ENCODE measurements at regions of chr15 and their contacts with region 1.

Region 1: GRCh38 chr15:100918034-100918689 is 995 bp upstream of the LRRK1 start:
- DNase-seq: peak; percentile 38 to 62
- ATAC-seq: peak; percentile 63 to 72
- H3K4me3 ChIP-seq: peak overlapping the region; percentile 54 to 67 (median 63)
- H3K27ac ChIP-seq: peak overlapping the region in 2 of 4 donors; percentile 14 to 19
- H3K4me1 ChIP-seq: no peaks in the 10 kb centered on the region
- H3K27me3 ChIP-seq: peaks cover 3 to 14% (median 11%) of the 10 kb centered on the region in 3 donors
- CTCF ChIP-seq: peak; percentile 68 to 87 (median 80)
- POLR2A ChIP-seq: no peak

Region 2: GRCh38 chr15:100544290-100544945 is 373.7 kb before region 1 on chr15:
- in situ Hi-C with region 1: no loop called
- intact Hi-C with region 1: no loop called
- DNase-seq: no peak
- ATAC-seq: no peak
- H3K4me3 ChIP-seq: no peak overlapping the region
- H3K27ac ChIP-seq: no peak overlapping the region
- H3K4me1 ChIP-seq: no peaks in the 10 kb centered on the region
- H3K27me3 ChIP-seq: peaks cover 0 to 9% (median 0%) of the 10 kb centered on the region in 3 donors
- CTCF ChIP-seq: no peak
- POLR2A ChIP-seq: no peak

Region 3: DNA sequence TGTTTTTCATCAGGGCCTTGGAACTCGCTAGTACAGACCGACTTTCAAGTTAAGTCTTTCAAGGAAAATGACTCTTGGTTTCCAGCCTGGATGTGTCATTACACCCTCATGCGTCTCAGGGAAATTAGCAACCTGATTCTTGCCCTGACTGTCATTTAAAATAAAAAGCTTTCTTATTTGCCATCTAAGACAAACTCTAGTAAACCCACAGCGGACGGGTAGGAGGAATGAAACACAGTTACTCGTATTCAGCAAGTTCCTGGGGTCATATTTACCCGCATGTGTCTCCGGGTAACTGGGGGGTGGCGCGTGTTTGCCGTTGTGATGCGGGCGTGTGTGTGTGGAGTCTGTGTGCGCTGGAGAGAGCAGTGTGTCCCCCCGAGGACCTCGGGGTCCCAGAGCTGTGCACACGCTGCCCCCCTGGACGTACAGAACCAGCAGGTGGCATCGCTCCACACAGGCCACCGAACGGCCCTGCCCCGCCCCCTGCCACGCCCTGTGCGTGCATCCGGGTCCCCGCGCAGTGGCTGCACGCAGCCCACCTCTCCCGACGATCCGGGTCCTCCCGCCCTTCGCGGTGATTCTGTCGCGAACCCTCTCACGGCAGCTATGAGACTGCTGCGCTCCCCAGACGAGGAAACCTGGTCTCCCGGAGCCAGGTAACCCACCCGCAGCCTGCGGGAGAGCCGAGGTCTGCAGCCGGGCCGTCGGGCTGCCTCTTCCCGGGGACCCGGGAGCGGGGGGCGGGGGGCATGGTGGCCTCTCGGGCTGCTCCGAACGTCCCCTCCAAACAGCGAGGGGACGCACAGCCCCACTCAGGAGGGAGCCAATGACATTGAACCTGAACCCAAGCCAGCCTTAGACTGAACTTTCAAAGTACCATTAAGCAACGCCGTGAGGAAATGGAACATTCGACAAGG is 68.7 kb before region 1 on chr15:
- in situ Hi-C with region 1: no loop called
- intact Hi-C with region 1: loop called (anchors 10 kb)
- DNase-seq: no peak
- ATAC-seq: peak in 1 of 2 donors; percentile 27
- H3K4me3 ChIP-seq: peak overlapping the region; percentile 31 to 53 (median 49)
- H3K27ac ChIP-seq: no peak overlapping the region
- H3K4me1 ChIP-seq: peaks cover 0 to 3% of the 10 kb centered on the region in 2 donors
- H3K27me3 ChIP-seq: peaks cover 11 to 16% (median 12%) of the 10 kb centered on the region in 3 donors
- CTCF ChIP-seq: no peak
- POLR2A ChIP-seq: no peak

Region 4: GRCh38 chr15:100889385-100890050 is 28.6 kb before region 1 on chr15:
- in situ Hi-C with region 1: no loop called
- intact Hi-C with region 1: no loop called
- DNase-seq: peak in 1 of 2 donors; percentile 50
- ATAC-seq: peak; percentile 63 to 75
- H3K4me3 ChIP-seq: no peak overlapping the region
- H3K27ac ChIP-seq: peak overlapping the region in 1 of 4 donors; percentile 54
- H3K4me1 ChIP-seq: no peaks in the 10 kb centered on the region
- H3K27me3 ChIP-seq: peaks cover 7 to 16% (median 11%) of the 10 kb centered on the region in 3 donors
- CTCF ChIP-seq: no peak
- POLR2A ChIP-seq: no peak

Region 5: DNA sequence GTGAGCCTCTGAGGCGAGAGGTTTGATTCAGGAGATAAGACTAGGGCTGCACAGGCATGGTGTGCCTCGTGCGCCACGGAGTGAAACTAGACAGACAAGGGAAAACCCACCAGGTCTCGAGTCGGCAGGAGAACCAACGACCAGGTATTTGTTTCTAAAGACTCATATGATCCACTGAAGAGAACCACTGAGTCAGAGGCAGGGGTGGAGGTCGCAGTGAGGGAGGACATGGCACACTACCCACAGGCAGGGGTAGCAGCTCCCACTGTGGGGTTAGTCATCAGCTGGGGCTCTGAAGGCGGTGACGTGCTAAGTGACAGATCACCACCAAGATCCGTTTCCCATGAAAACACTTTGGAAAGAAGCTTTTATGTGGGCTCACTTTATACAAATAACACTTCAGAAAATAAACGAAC is 288.0 kb after region 1 on chr15:
- in situ Hi-C with region 1: no loop called
- intact Hi-C with region 1: no loop called
- DNase-seq: no peak
- ATAC-seq: no peak
- H3K4me3 ChIP-seq: no peak overlapping the region
- H3K27ac ChIP-seq: no peak overlapping the region
- H3K4me1 ChIP-seq: peaks cover 25 to 32% of the 10 kb centered on the region in 2 donors
- H3K27me3 ChIP-seq: no peaks in the 10 kb centered on the region
- CTCF ChIP-seq: no peak
- POLR2A ChIP-seq: no peak